GM13976 (cell line): ENCODE measurements at regions of chr1 and their contacts with region 1.

Region 1: DNA sequence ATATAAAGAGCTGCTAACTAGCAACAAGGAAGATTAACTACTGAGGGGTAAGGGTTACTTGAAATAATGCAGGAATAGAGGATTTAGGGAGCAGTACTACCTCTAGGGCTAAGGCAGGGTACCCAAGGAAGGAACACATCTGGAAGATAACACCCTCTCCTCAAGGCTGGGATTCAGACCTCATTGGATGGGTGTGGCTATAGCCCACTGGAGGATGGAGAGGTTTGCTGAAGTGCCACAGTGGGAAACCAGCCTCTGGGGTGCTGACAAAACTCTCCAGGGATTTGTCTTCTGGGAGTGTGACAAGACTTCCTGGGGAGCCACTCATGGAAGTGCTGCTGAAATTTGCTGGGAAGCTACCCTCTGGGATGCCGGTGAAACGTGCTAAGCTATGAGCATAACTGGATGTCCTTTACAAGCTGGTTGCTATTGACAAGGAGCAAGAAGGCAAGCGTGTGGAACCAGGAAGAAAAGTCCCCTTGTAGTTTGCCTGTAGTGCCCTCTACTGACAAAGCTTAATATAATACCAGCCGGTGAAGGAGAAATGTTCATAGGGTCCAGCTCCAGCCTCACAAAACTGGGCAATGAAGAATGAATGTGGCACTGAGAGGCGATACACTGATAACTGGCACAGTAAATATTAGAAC is 122.8 kb upstream of the USP24 start:
- DNase-seq: peak; percentile 71
- CTCF ChIP-seq: peak; percentile 41

Region 2: DNA sequence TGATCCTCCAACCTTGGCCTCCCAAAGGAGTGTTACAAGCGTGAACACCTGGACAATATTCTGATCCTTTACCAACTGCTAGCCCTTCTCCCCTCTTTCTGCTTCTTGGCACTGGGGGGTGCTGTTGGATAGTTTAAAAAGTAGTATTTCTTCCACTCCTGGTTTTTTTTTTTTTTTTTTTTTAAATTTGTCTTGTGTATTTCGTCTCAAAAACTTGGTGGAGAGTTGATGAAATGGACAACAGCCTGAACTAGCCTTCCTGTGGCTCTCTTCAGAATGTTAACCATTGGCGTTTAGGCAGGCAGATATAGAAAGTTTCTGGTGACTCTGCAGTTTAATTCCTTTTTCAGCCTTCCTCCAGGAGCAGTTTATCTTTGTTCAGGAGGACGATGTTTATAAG is 53.1 kb before region 1 on chr1:
- in situ Hi-C with region 1: loop called (anchors 10 kb)
- DNase-seq: no peak
- CTCF ChIP-seq: peak; percentile 47

Region 3: GRCh38 chr1:55751776-55752175 is 413.9 kb after region 1 on chr1:
- in situ Hi-C with region 1: no loop called
- DNase-seq: no peak
- CTCF ChIP-seq: no peak